H1 (cell line): ENCODE measurements at regions of chr1 and their contacts with region 1.

Region 1: DNA sequence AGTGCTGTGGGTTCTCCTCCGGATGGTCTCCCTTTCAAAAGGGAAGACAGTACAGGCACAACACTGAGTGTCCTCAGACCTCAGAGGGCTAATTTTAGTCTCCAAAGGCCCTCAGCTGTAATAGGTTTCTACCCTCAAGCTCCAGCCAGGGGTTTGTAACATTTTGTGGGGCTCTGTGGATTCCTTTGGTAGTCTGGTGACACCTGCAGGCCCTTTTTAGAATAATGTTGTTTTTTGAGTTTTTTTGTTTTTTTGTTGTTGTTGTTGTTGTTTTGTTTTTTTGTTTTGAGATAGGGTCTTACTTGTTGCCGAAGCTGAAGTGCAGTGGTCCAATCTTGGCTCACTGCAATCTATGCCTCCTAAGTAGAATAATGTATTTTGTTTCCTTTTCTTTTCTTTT is 15.0 kb upstream of the TMEM201 start:
- DNase-seq: no peak
- H3K4me3 ChIP-seq: no peak overlapping the region
- H3K27ac ChIP-seq: no peak overlapping the region
- H3K4me1 ChIP-seq: no peaks in the 10 kb centered on the region
- H3K27me3 ChIP-seq: no peaks in the 10 kb centered on the region
- CTCF ChIP-seq: peak in 2 of 3 experiments; percentile 34 to 51; a peak in 3 of 4 replicates
- EP300 ChIP-seq: no peak
- POLR2A ChIP-seq: no peak
- RAD21 ChIP-seq: peak; percentile 62 to 67

Region 2: GRCh38 chr1:9503001-9503675 is 70.6 kb before region 1 on chr1:
- CTCF ChIA-PET with region 1: interaction called, 11 read pairs
- POLR2A ChIA-PET with region 1: no interaction called
- DNase-seq: no peak
- H3K4me3 ChIP-seq: no peak overlapping the region
- H3K27ac ChIP-seq: no peak overlapping the region
- H3K4me1 ChIP-seq: no peaks in the 10 kb centered on the region
- H3K27me3 ChIP-seq: no peaks in the 10 kb centered on the region
- CTCF ChIP-seq: no peak
- EP300 ChIP-seq: no peak
- POLR2A ChIP-seq: no peak
- RAD21 ChIP-seq: no peak

Region 3: DNA sequence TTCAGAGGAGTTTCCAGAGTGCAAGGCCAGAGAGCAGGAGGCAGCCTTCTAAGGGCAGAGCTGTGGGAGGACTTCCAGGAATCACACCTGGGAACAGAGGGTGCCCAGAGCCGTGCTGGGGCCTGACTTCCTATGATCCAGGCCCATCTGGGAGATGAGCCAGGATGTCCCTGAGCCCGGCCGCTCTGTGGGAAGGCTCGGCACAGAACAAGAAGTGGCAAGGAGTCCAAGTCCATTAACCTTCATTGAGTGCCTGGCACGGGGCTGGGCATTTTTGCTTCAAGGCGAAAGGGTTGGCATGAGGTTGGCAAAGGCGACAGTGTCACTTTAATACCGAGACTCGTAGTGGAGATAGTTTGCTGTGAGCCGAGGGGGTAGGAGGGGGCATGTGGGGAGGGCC is 33.2 kb after region 1 on chr1:
- CTCF ChIA-PET with region 1: no interaction called
- POLR2A ChIA-PET with region 1: no interaction called
- DNase-seq: no peak
- H3K4me3 ChIP-seq: no peak overlapping the region
- H3K27ac ChIP-seq: no peak overlapping the region
- H3K4me1 ChIP-seq: no peaks in the 10 kb centered on the region; a peak in 1 of 7 replicates
- H3K27me3 ChIP-seq: no peaks in the 10 kb centered on the region
- CTCF ChIP-seq: no peak
- EP300 ChIP-seq: no peak
- POLR2A ChIP-seq: no peak
- RAD21 ChIP-seq: no peak

Region 4: DNA sequence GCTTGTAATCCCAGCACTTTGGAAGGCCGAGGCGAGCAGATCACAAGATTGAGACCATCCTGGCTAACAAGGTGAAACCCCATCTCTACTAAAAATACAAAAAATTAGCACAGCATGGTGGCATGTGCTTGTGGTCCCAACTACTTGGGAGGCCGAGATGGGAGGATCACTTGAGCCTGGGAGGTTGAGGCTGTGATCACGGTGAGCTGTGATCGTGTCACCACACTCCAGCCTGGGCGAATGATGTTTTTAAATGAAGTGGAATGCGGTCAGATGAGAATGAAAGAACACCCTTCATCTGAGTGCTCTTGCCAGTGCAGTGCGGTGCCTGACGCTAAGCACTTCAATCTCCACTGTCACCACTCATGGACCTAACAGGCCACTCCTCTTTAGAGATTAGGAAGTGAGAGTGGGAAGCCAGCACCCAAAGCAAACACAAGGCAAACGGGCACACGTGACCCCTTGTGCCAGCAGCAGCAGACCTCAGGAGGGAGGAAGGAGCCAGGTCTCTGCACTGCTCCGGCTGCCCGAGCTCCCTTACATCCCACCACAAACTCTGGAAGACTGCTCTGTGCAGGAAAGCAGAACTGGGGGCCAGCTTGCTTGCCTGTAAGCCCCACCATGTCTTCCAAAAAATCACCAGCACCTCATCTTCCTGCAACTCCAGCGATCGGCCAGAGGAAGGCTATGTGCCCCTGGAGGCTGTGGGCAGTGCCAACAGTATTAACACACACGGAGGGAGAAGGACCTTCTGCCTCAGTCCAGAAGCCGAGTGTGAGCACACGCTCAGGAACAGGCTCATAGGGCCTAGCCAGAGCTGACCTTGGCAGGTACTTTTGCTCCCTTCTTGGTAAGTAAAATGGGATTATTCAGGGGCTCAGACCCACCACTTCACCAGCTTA is 326.7 kb after region 1 on chr1:
- CTCF ChIA-PET with region 1: no interaction called
- POLR2A ChIA-PET with region 1: no interaction called
- DNase-seq: no peak
- H3K4me3 ChIP-seq: no peak overlapping the region
- H3K27ac ChIP-seq: no peak overlapping the region
- H3K4me1 ChIP-seq: no peaks in the 10 kb centered on the region; a peak in 1 of 7 replicates
- H3K27me3 ChIP-seq: no peaks in the 10 kb centered on the region
- CTCF ChIP-seq: no peak
- EP300 ChIP-seq: no peak
- POLR2A ChIP-seq: no peak
- RAD21 ChIP-seq: no peak